Activated T-helper 1 cell treated with anti-CD3 and anti-CD28 coated beads, Interleukin-12 subunit alpha, Interleukin-12 subunit beta, Interleukin-2, Interleukin-4 antibody, amounts not matched to agents 30 ng/mL and 10 ng/mL and 1 ng/mL, durations not matched to agents 14 hours and 24 hours and 36 hours (primary cell): ENCODE measurements at regions of chr7 and their contacts with region 1.

Region 1: GRCh38 chr7:102404005-102404861 is 8.1 kb downstream of the PRKRIP1 start:
- DNase-seq: peak; percentile 27
- H3K4me3 Mint-ChIP-seq: no peak overlapping the region
- H3K27ac Mint-ChIP-seq: no peak overlapping the region
- H3K4me1 Mint-ChIP-seq: no peaks in the 10 kb centered on the region
- H3K27me3 Mint-ChIP-seq: no peaks in the 10 kb centered on the region

Region 2: GRCh38 chr7:102433219-102434038 is 29.2 kb after region 1 on chr7 and contains the start of gene ORAI2:
- intact Hi-C with region 1: loop called (anchors 1 kb)
- DNase-seq: peak; percentile 82
- H3K4me3 Mint-ChIP-seq: peak within 1 kb of the TSS; percentile 84
- H3K27ac Mint-ChIP-seq: peak within 1 kb of the TSS; percentile 87
- H3K4me1 Mint-ChIP-seq: peaks cover 58% of the 10 kb centered on the region
- H3K27me3 Mint-ChIP-seq: no peaks in the 10 kb centered on the region
- total RNA-seq, gene ORAI2: 55.2 and 59.9 TPM in 2 replicates

Region 3: GRCh38 chr7:102450242-102450641 is 46.0 kb after region 1 on chr7:
- intact Hi-C with region 1: loop called (anchors 1 kb)
- DNase-seq: no peak
- H3K4me3 Mint-ChIP-seq: no peak overlapping the region
- H3K27ac Mint-ChIP-seq: no peak overlapping the region
- H3K4me1 Mint-ChIP-seq: no peaks in the 10 kb centered on the region
- H3K27me3 Mint-ChIP-seq: no peaks in the 10 kb centered on the region